ENCODE measurements at regions of chr14 and their contacts with region 1.

Region 1: DNA sequence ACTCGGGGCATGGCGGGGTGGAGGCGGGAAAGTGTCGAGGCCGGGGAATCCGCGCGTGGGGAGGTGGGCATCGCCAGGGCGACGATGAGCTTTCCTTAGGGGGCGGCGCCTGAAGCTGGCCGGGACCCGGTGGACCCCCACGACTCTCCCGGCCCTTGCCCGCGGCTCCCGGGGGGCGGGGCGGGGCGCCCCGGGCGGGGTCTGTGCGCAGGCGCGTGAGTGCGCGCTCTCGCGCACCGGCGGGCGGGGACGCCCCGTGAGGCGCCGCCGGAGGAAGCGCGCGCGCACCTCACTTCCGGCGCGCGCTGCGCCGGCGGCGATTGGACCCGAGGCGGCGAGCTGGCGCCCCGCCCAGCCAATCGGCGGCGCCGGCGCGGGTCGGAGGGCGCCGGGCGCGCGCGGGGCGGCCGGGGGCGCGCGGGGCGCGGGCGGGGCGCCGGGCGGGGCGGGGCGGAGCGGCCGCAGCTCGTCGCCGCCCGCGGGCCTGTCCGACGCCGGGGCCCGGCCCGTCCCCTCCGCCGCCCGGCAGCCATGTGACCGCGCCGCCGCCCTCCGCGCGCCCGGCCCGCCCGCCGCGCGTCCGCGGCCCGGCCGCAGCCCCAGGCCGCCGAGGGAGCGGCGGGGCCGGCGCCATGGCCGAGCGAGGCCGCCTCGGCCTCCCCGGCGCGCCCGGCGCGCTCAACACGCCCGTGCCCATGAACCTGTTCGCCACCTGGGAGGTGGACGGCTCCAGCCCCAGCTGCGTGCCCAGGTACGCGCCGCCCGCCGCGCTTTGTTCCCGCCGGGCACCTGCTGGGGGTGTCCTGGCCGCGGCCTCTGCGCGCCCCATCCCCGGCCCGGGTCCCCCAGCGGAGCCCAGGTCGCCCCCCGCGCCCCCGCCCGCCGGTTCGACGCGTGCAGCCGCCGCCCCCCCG is at the start of gene PACS2:
- DNase-seq: peak; percentile 60
- H3K4me3 ChIP-seq: peak within 1 kb of the TSS; percentile 74 to 87
- H3K27ac ChIP-seq: peak within 1 kb of the TSS; percentile 96 to 97
- H3K4me1 ChIP-seq: peaks cover 7% of the 10 kb centered on the region
- H3K27me3 ChIP-seq: no peaks in the 10 kb centered on the region
- CTCF ChIP-seq: no peak
- POLR2A ChIP-seq: no peak
- total RNA-seq, gene PACS2: 48.5 to 124 TPM

Region 2: GRCh38 chr14:104953097-104953496 is 361.4 kb before region 1 on chr14:
- intact Hi-C with region 1: no loop called
- DNase-seq: no peak
- H3K4me3 ChIP-seq: no peak overlapping the region
- H3K27ac ChIP-seq: no peak overlapping the region
- H3K4me1 ChIP-seq: no peaks in the 10 kb centered on the region
- H3K27me3 ChIP-seq: no peaks in the 10 kb centered on the region
- CTCF ChIP-seq: no peak
- POLR2A ChIP-seq: no peak

Region 3: DNA sequence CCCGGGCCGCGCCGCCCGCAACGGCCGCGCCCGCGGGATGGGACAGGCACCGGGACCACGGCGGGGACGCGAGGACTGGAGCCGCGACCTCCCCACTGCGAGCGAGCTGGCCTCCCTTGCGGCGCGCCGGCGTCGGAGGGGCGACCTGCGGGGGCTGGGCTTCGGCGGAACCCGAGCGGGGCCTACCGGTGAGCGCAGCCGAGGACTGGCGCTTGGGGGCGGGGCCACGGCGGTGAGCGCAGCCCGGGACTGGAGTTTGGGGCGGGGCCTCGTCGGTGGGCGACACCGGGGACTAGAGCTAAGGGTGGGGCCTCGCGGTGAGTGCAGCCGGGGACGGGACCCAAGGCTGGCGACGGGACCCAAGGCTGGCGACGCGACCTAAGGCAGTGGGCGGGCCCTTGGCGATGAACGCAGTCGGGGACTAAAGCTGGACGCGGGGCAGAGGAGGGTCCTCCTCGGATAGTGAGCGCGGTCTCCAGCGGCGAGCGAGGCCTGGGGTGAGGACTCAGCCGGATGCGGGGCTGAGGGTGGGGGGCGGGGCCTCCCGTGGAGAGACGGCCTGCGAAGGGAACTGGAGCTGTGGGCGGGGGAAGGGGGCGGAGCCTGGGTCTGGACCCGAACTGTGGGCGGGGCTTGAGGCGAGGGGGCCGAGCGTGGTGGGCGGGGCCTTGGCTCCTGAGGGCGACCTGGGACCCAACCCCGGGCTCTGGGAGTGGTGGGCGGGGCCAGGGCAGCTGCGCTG is 13.6 kb before region 1 on chr14 and contains the start of gene BRF1:
- intact Hi-C with region 1: loop called (anchors 1 kb)
- DNase-seq: peak; percentile 98
- H3K4me3 ChIP-seq: peak within 1 kb of the TSS; percentile 70 to 71
- H3K27ac ChIP-seq: peak within 1 kb of the TSS; percentile 96 to 97
- H3K4me1 ChIP-seq: peaks cover 3% of the 10 kb centered on the region
- H3K27me3 ChIP-seq: no peaks in the 10 kb centered on the region
- CTCF ChIP-seq: peak in 1 of 4 experiments; percentile 23
- POLR2A ChIP-seq: no peak
- total RNA-seq, gene BRF1: 64.9 to 88.9 TPM

Region 4: GRCh38 chr14:105430535-105430934 is 116.0 kb after region 1 on chr14:
- intact Hi-C with region 1: no loop called
- DNase-seq: no peak
- H3K4me3 ChIP-seq: no peak overlapping the region
- H3K27ac ChIP-seq: no peak overlapping the region
- H3K4me1 ChIP-seq: no peaks in the 10 kb centered on the region
- H3K27me3 ChIP-seq: no peaks in the 10 kb centered on the region
- CTCF ChIP-seq: no peak
- POLR2A ChIP-seq: no peak

Region 5: DNA sequence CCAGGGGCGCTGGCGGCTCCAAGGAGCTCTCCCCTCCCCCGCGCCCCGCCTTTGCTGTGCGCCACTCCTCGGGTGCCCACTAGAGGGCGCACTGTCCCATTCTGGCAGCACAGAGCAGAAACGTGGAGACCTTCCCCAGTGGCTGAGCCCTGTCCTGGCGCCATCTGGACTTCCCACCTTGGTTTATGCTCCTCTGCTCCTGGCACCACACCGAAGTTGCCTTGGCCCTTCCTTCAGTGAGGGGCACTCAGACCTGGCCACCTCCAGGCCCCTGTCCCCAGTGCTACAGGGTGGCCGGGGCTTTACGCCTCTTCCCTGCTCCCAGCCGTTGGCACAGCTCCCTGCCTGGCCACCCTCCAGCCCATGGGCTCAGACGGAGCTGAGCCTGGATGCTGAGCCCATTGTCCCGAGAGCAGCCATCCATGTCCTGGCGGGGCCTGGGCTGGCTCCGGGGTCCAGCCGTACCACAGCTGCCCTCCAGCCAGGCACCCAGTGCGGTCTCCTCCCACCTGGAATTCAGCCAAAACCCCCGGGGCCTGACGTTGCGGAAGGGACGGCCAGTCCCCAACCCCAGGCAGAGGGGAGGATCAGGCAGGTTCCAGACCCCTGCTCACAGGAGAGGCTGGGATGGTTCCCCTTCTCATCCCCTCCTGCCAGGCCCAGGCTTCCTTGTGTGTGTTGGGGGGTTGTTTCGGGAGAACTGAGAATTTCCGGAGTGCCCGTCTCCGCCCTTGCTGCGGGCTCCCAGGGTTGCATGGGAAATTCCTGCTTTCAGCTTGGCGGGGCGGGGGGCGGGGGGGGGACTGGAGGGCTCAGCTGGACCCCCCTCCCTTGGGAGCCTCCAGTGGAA is 166.6 kb after region 1 on chr14:
- intact Hi-C with region 1: loop called (anchors 5 kb)
- DNase-seq: peak; percentile 86
- H3K4me3 ChIP-seq: peak overlapping the region; percentile 13 to 18
- H3K27ac ChIP-seq: peak overlapping the region; percentile 78 to 81
- H3K4me1 ChIP-seq: peaks cover 35% of the 10 kb centered on the region
- H3K27me3 ChIP-seq: no peaks in the 10 kb centered on the region
- CTCF ChIP-seq: peak; percentile 98 to 99 (median 98)
- POLR2A ChIP-seq: peak; percentile 42